CD8-positive, alpha-beta memory T cell (primary cell): ENCODE measurements at regions of chr10 and their contacts with region 1.

Region 1: GRCh38 chr10:32256613-32257437 is 90.1 kb downstream of the EPC1 start:
- DNase-seq: peak; percentile 41 to 77 (median 55)
- H3K4me3 ChIP-seq: no peak overlapping the region
- H3K4me3 Mint-ChIP-seq: peak overlapping the region in 1 of 7 donors; percentile 10
- H3K27ac ChIP-seq: no peak overlapping the region
- H3K27ac Mint-ChIP-seq: no peak overlapping the region
- H3K4me1 ChIP-seq: peaks cover 7% of the 10 kb centered on the region
- H3K4me1 Mint-ChIP-seq: peaks cover 7 to 8% (median 8%) of the 10 kb centered on the region in 3 donors
- H3K27me3 ChIP-seq: no peaks in the 10 kb centered on the region
- H3K27me3 Mint-ChIP-seq: no peaks in the 10 kb centered on the region

Region 2: DNA sequence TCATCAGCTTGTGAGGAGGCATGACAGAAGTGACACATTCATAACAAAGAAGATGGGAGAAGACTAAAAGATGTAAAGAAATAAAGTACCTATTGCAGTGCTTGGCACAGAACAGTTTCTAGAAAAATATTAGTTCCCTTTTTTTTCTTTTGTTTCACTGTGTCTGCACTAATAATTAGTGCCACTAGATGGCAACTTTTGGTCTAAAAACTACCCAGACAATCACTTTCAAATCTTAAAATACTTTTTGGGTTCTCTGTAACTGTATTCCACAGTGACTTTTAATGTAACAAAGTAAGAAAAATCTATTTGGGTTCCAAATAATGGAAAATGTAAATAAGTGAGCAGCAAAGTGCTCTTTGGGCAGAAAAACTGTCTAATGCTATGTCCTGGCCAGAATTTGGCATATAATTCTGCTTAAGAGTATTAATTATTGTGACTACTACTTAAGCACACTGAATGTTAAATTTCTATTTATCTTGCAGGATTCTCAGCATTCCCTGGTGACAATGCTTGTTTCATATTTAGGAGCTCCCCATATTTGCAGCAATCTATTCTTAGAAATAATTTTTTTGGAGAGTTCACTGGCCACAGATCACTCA is 65.8 kb before region 1 on chr10:
- CTCF ChIA-PET with region 1: no interaction called
- POLR2A ChIA-PET with region 1: no interaction called
- DNase-seq: peak in 2 of 5 donors; percentile 22 to 33
- H3K4me3 ChIP-seq: no peak overlapping the region
- H3K4me3 Mint-ChIP-seq: no peak overlapping the region
- H3K27ac ChIP-seq: no peak overlapping the region
- H3K27ac Mint-ChIP-seq: peak overlapping the region in 1 of 8 donors; percentile 33
- H3K4me1 ChIP-seq: no peaks in the 10 kb centered on the region
- H3K4me1 Mint-ChIP-seq: peaks cover 0 to 5% (median 3%) of the 10 kb centered on the region in 3 donors
- H3K27me3 ChIP-seq: no peaks in the 10 kb centered on the region
- H3K27me3 Mint-ChIP-seq: peaks cover 0 to 3% of the 10 kb centered on the region in 2 donors

Region 3: DNA sequence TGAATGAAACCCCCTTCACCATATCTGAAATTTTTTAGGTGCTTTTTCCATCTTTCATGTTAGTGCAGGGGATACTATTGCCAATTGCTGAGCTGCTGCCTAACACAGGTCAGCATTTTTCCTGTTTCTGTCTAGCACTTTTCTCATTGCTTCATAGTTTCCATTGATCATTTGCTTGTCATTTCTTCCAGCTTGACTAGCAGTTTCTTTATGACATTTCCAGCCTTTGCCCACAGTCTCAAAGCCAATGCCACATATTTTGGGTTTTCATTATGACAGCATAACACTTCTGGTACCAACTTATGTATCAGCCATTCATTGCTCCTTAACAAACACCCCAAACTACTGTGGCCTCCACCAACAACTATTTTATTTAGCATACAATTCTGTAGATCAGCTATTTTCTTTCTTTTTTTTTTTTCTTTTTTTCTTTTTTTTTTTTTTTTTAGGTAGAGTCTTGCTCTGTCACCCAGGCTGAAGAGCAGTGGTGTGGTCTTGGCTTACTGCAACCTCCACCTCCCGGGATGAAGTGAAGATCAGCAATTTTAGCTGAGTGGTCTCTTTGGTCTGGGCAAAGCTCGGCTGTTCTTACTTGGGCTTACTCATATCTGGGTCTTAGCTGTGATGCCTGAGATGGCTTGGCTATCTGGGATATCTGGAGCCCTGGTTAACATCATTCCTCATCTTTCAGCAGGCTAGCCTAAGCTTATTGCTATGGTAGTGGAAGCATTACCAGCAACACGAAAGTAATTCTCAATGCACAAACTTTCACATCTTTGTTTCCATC is 12.2 kb before region 1 on chr10:
- CTCF ChIA-PET with region 1: interaction called, 11 read pairs
- POLR2A ChIA-PET with region 1: no interaction called
- DNase-seq: no peak
- H3K4me3 ChIP-seq: no peak overlapping the region
- H3K4me3 Mint-ChIP-seq: no peak overlapping the region
- H3K27ac ChIP-seq: no peak overlapping the region
- H3K27ac Mint-ChIP-seq: no peak overlapping the region
- H3K4me1 ChIP-seq: no peaks in the 10 kb centered on the region
- H3K4me1 Mint-ChIP-seq: peaks cover 0 to 4% (median 3%) of the 10 kb centered on the region in 3 donors
- H3K27me3 ChIP-seq: no peaks in the 10 kb centered on the region
- H3K27me3 Mint-ChIP-seq: peaks cover 0 to 12% of the 10 kb centered on the region in 2 donors